SK-N-SH (cell line): ENCODE measurements at regions of chr4 and their contacts with region 1.

Region 1: GRCh38 chr4:41882625-41883347 is 52.4 kb upstream of the TMEM33 start:
- DNase-seq: peak; percentile 90
- H3K4me3 ChIP-seq: peak overlapping the region; percentile 58
- H3K27ac ChIP-seq: peak overlapping the region in 1 of 2 experiments; percentile 99; a peak in 2 of 4 replicates
- H3K4me1 ChIP-seq: peaks cover 0 to 47% of the 10 kb centered on the region in 2 experiments; a peak in 3 of 4 replicates
- H3K27me3 ChIP-seq: peaks cover 52% of the 10 kb centered on the region
- CTCF ChIP-seq: peak; percentile 95
- EP300 ChIP-seq: peak in 1 of 2 experiments; percentile 38; a peak in 2 of 4 replicates
- RAD21 ChIP-seq: peak; percentile 75

Region 2: GRCh38 chr4:41741354-41741753 is 141.4 kb before region 1 on chr4:
- CTCF ChIA-PET with region 1: interaction called, 25 read pairs
- POLR2A ChIA-PET with region 1: interaction called, 461 read pairs
- DNase-seq: no peak
- H3K4me3 ChIP-seq: no peak overlapping the region
- H3K27ac ChIP-seq: no peak overlapping the region; a peak in 2 of 4 replicates
- H3K4me1 ChIP-seq: peaks cover 0 to 16% of the 10 kb centered on the region in 2 experiments; a peak in 2 of 4 replicates
- H3K27me3 ChIP-seq: peaks cover 23% of the 10 kb centered on the region
- CTCF ChIP-seq: no peak
- EP300 ChIP-seq: no peak
- RAD21 ChIP-seq: no peak

Region 3: DNA sequence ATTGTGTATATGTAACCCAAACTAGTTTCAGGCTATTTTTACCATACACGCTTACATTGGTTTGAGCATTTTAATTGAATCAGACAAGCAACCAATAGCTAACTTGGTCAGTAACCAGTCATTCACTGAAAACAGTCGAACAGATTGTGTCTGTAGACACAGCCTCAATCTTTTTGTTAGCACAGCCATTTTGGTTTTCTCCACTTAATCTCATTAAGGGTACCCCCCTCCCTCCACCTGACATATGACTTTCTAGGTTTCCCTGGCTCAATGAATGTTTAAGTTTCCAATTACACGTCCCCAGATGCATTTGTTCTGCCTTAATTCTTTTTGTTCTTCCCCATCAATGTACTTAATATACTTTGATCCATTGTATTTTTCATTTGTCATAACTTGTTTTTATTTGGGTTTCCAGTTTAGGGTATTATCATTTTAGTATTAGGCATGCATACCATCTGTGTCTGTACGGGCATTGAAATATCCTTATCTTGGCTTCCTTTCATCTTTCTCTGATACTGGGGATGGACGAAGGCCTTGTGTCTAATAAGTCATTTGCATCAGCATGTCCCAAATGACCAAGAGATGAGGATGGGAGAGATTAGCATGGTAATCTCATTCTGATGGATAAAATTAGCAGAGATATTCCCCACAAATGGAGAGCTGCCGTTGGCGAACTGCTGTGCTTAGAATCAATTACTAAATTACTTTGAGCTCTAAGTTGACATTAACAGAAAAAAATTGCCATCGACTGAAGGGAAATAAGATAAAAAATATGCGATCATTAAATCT is 98.4 kb before region 1 on chr4:
- CTCF ChIA-PET with region 1: interaction called, 4 read pairs
- POLR2A ChIA-PET with region 1: interaction called, 19 read pairs
- DNase-seq: peak; percentile 62
- H3K4me3 ChIP-seq: no peak overlapping the region; a peak in 1 of 4 replicates
- H3K27ac ChIP-seq: peak overlapping the region in 1 of 2 experiments; percentile 98; a peak in 2 of 4 replicates
- H3K4me1 ChIP-seq: peaks cover 0 to 24% of the 10 kb centered on the region in 2 experiments; a peak in 2 of 4 replicates
- H3K27me3 ChIP-seq: no peaks in the 10 kb centered on the region
- CTCF ChIP-seq: no peak
- EP300 ChIP-seq: peak in 1 of 2 experiments; percentile 83; a peak in 2 of 4 replicates
- RAD21 ChIP-seq: no peak

Region 4: DNA sequence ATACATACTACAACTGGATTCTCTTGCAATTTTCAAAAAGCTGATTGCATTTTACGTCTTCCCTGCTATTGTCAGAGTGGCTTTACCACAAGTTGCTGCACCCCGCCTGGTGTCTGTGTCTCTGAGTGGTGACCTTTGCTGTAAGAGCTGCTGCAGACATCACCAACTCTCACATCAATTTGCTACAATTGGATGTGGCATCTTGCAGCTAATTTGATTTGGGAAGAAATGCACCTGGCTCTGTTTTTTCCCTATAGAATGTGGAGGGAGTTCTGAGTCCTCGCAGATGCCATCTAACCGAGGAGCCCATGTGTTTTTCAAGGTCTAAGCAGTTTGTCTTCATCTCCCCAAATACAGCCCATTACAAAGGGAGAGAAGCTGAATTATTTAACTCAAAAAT is 60.5 kb before region 1 on chr4:
- CTCF ChIA-PET with region 1: interaction called, 12 read pairs
- POLR2A ChIA-PET with region 1: interaction called, 10 read pairs
- DNase-seq: peak; percentile 45
- H3K4me3 ChIP-seq: no peak overlapping the region
- H3K27ac ChIP-seq: peak overlapping the region in 1 of 2 experiments; percentile 98; a peak in 2 of 4 replicates
- H3K4me1 ChIP-seq: peaks cover 0 to 24% of the 10 kb centered on the region in 2 experiments; a peak in 2 of 4 replicates
- H3K27me3 ChIP-seq: no peaks in the 10 kb centered on the region
- CTCF ChIP-seq: no peak
- EP300 ChIP-seq: peak in 1 of 2 experiments; percentile 98; a peak in 2 of 4 replicates
- RAD21 ChIP-seq: peak; percentile 37

Region 5: DNA sequence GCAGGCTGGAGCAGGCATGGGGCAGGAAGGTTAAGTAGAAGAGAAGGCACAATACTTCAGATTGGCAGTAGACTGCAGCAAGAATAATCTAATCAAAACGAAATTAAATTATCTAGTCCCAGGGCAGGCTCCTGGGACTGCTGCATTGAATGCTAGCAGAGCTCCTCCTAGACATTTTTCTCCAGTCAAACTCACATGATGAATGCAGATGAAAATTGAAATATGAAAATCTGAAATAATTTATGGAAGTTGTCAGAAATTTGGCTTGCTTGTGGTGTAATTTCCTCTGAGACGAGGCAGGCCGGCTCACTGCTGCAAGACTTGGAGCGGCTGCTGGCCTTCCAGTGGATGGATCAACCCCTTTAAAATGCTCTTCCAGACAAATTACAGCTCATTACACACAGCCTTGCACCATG is 25.6 kb before region 1 on chr4:
- CTCF ChIA-PET with region 1: interaction called, 79 read pairs
- POLR2A ChIA-PET with region 1: interaction called, 524 read pairs
- DNase-seq: peak; percentile 69
- H3K4me3 ChIP-seq: no peak overlapping the region
- H3K27ac ChIP-seq: peak overlapping the region in 1 of 2 experiments; percentile 100; a peak in 2 of 4 replicates
- H3K4me1 ChIP-seq: peaks cover 0 to 27% of the 10 kb centered on the region in 2 experiments; a peak in 2 of 4 replicates
- H3K27me3 ChIP-seq: peaks cover 14% of the 10 kb centered on the region; the same call in 1 of the 2 replicates
- CTCF ChIP-seq: no peak
- EP300 ChIP-seq: peak; percentile 4 to 98; a peak in 3 of 4 replicates
- RAD21 ChIP-seq: peak; percentile 32

Region 6: GRCh38 chr4:41865306-41865980 is 17.3 kb before region 1 on chr4:
- CTCF ChIA-PET with region 1: interaction called, 79 read pairs
- POLR2A ChIA-PET with region 1: interaction called, 524 read pairs
- DNase-seq: no peak
- H3K4me3 ChIP-seq: no peak overlapping the region
- H3K27ac ChIP-seq: peak overlapping the region in 1 of 2 experiments; percentile 100; a peak in 2 of 4 replicates
- H3K4me1 ChIP-seq: peaks cover 0 to 46% of the 10 kb centered on the region in 2 experiments; a peak in 2 of 4 replicates
- H3K27me3 ChIP-seq: no peaks in the 10 kb centered on the region
- CTCF ChIP-seq: no peak
- EP300 ChIP-seq: no peak
- RAD21 ChIP-seq: no peak

Region 7: DNA sequence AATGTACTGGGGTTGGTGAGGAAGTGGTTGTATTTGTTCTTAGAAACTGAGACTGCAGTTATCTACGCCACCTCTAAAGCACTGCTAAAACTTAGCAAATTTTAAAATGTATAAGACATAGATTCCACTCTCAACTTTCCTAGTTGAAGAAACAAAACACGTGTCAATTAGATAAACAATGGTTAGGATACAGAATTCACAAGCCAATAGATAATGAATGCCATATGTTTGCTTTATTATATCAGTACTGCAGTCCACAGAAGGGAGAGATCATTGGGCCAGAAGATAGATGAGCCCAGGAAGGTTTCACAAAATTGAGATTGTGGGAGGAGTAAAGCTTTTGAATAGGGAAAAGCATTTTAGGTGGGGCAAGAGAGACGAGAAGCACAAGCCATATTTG is 66.7 kb after region 1 on chr4:
- CTCF ChIA-PET with region 1: no interaction called
- POLR2A ChIA-PET with region 1: no interaction called
- DNase-seq: no peak
- H3K4me3 ChIP-seq: no peak overlapping the region
- H3K27ac ChIP-seq: no peak overlapping the region
- H3K4me1 ChIP-seq: no peaks in the 10 kb centered on the region; a peak in 1 of 4 replicates
- H3K27me3 ChIP-seq: no peaks in the 10 kb centered on the region
- CTCF ChIP-seq: no peak
- EP300 ChIP-seq: no peak
- RAD21 ChIP-seq: no peak